Cardiac septum (tissue), 1 donor: ENCODE measurements at regions of chr17 and their contacts with region 1.

Region 1: GRCh38 chr17:66165513-66166123 is 26.3 kb downstream of the CEP112 start:
- DNase-seq: no peak

Region 2: DNA sequence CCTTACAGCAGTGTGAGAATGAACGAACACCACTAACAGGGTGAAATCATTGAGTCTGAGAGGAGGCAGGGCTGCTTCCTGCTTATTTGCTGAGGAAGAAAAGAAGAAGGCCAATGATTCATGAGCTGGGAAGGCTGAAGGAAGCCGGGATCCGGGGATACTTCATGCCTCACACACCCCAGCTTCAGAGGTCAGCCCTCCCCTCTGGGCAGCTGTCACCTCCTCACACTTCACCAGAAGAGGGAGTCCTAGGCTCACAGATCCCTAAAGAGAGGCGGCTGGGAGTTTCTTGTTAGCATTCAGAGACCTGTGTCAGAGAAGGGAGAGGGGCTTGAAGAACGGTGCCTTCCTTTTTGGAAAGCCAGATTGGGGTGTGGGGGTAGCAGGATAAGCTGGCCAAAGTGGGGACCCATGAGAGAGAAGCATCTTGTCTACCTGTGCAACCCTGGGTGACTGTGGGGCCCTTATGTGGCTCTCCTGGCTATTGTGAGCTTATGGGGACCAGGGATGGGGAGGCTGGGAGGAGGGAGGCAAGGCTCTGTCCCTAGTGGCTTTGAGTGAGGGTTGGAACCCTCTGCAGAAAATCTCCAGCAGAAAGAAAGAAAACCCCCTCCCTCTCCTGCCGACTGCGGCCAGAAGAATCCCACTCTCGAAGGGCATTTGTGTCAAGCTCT is 933.8 kb before region 1 on chr17:
- intact Hi-C with region 1: loop called (anchors 5 kb)
- DNase-seq: no peak

Region 3: DNA sequence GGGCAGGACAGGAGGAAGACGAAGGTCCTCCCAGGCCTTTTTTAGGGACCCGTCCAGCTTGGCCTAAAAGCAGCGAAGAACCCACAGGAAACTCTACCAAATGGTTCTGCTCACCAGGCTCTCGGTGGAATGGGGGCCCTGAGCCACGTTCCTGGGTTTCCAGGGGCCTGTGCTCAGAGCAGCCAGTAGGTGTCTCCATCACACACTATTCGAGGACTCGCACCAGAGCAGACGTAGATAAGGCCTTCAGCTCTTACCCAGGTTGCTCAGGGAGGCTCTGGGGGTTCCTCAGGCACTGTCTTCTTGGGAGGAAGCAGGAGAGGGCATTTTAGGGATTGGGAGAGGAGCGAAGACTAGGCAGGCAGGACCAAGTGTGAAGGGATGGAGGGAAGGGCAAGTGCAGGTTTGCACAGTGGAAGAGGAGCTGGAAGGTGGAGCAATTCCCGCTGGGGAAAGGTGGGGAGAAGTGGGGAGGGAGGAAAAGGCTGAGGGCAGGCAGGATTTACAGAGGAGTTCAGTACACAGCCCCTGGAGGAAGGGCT is 871.4 kb before region 1 on chr17:
- intact Hi-C with region 1: loop called (anchors 5 kb)
- DNase-seq: no peak

Region 4: GRCh38 chr17:65455972-65456343 is 709.7 kb before region 1 on chr17:
- intact Hi-C with region 1: loop called (anchors 10 kb)
- DNase-seq: no peak

Region 5: DNA sequence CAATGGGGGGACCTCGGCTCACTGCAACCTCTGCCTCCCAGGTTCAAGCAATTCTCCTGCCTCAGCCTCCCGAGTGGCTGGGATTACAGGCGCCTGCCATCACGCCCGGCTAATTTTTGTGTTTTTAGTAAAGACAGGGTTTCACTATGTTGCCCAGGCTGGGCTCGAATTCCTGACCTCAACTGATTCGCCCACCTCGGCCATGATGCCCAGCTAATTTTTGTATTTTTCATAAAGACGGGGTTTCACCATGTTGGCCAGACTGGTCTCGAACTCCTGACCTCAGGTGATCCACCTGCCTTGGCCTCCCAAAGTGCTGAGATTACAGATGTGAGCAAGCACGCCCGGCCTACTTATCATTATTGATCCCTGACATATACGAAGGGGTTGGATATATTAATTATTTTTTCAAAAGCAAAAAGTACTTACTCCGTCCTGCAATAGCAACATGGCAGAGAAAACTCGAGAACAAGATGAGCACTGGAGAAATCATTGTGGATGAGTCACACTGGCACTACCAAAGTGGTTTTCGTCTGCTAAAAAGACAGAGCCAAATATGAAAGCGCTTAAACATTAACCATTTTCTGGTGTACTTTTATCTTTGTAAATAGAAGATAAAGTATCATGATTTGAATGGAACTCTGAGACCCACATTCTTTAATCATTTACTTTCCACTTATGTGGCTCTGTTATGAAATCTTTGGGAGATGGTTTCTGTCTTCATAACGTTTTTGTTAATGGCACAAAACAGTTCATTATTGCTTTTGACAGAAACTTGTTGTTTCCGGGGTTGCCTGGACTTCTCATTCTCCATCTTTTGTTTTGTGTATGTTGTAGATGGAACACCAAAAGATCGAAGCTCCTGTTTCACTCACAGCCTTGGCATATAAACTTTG is 63.5 kb after region 1 on chr17 and contains the start of gene APOH:
- intact Hi-C with region 1: no loop called
- DNase-seq: no peak
- total RNA-seq, gene APOH: not detected